Activated naive CD4-positive, alpha-beta T cell treated with anti-CD3 and anti-CD28 coated beads for 36 hours (primary cell): ENCODE measurements at regions of chr1 and their contacts with region 1.

Region 1: GRCh38 chr1:176559878-176560277 is 96.9 kb downstream of the PAPPA2 start:
- DNase-seq: peak; percentile 38
- H3K4me3 Mint-ChIP-seq: no peak overlapping the region
- H3K27ac Mint-ChIP-seq: no peak overlapping the region
- H3K4me1 Mint-ChIP-seq: no peaks in the 10 kb centered on the region
- H3K27me3 Mint-ChIP-seq: peaks cover 12% of the 10 kb centered on the region

Region 2: DNA sequence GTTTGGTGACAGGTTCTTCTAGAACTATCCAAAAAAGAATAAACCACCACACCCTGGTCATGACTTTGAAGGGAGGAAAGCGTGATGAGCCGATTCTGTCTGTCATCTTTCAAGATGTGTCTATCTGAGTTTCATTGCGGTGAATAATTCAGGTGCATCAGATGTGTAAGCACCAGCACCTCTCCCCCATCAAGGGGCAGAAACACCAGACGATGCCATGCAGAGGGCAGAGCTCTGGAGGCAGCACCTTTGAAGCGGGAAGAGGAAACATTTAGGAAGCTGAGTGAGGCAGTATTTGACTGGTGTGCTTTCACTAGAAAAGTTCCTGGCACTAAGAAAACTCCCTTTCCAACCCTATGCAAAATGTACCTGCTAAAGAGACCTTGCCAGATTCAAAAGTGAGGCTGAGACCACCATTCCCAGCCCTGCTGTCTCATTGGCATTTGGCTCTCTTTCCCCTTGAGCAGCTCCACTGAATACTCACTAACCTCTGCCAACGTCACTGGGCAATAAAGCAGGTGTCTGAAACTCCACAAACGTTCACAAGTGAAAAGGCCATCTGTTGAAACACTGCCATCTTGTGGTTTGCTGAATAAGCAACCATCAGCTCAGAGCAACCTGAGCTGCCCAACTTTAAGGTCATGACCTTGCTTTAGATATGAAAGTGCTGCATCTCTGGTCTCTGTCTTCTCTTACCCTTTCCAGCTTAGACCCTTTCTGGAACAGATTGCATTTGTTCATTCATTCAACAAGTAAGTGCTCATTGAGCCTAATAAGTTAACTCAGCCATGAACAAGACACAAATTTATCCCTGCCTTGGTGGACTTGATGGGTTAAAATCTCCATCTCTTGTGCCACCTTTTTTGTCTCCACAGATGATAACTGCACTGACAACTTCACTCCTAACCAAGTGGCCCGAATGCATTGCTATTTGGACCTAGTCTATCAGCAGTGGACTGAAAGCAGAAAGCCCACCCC is 131.7 kb after region 1 on chr1:
- CTCF ChIA-PET with region 1: interaction called, 12 read pairs
- intact Hi-C with region 1: loop called (anchors 1 kb)
- DNase-seq: peak; percentile 21
- H3K4me3 Mint-ChIP-seq: no peak overlapping the region
- H3K27ac Mint-ChIP-seq: no peak overlapping the region
- H3K4me1 Mint-ChIP-seq: no peaks in the 10 kb centered on the region
- H3K27me3 Mint-ChIP-seq: no peaks in the 10 kb centered on the region

Region 3: DNA sequence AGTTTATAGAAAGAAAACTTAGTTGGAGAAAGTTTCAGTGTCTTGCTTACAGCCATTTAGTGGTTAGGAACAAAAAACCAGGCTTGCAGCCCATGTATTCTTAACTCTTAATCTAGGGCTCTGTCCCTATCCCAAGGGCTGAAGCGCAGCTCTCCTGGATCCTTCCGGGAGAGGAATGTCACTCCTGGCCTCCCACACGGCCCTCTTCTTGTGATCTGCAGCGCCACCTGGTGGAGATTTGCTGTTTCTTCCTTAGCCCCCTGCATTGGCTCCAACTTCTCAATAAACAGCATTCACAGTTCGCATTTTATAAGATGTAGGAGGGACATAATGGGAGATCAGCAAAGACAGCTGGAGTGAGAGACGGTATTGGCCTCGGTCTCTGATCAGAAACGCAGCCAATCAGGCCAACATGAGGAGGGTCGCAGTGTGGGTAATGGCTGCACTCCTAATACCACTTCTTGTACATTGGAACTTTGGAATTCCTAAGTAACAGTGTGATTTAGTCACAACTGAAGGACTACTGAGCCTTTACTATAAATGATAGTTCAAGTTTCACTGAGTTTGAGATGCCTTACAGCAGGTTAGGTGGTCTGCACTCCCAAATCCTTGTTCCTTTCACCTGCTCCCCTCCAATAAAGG is 321.2 kb after region 1 on chr1:
- CTCF ChIA-PET with region 1: interaction called, 3 read pairs
- intact Hi-C with region 1: loop called (anchors 1 kb)
- DNase-seq: peak; percentile 65
- H3K4me3 Mint-ChIP-seq: no peak overlapping the region
- H3K27ac Mint-ChIP-seq: no peak overlapping the region
- H3K4me1 Mint-ChIP-seq: no peaks in the 10 kb centered on the region
- H3K27me3 Mint-ChIP-seq: no peaks in the 10 kb centered on the region